ENCODE measurements at regions of chr3 and their contacts with region 1.

Region 1: DNA sequence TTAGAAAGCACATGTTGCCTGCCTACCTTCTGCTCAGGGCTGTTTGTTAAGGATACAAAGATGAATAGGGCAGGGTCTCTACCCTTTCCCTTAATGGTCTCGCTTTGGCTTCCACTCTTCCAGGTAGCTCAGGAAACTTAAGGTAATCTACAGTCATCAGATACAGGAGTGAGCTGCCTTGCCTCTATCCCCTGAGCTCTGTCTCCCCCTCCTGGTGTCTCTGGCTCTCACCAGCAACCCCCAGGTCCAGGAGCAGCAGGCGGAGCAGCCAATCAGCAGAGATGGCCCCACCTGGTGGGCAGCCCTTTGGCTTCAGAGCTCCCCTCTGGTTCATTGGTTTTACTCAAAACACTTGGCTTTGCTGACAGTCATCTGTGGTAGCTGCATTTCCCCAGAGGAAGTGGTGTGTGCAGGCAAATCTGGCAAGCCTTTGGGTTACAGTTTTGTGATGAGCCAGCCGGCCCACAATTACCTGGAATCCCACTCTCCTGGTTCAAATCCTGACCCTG is 8.5 kb upstream of the CX3CR1 start:
- DNase-seq: peak; percentile 95
- ATAC-seq: peak; percentile 97
- H3K4me3 ChIP-seq: no peak overlapping the region
- H3K27ac ChIP-seq: no peak overlapping the region
- H3K4me1 ChIP-seq: peaks cover 17% of the 10 kb centered on the region
- H3K27me3 ChIP-seq: no peaks in the 10 kb centered on the region
- CTCF ChIP-seq: peak; percentile 93 to 99 (median 99); a peak in 5 of 6 replicates
- EP300 ChIP-seq: peak in 1 of 2 experiments; percentile 65; a peak in 2 of 4 replicates
- POLR2A ChIP-seq: no peak
- RAD21 ChIP-seq: peak; percentile 99

Region 2: DNA sequence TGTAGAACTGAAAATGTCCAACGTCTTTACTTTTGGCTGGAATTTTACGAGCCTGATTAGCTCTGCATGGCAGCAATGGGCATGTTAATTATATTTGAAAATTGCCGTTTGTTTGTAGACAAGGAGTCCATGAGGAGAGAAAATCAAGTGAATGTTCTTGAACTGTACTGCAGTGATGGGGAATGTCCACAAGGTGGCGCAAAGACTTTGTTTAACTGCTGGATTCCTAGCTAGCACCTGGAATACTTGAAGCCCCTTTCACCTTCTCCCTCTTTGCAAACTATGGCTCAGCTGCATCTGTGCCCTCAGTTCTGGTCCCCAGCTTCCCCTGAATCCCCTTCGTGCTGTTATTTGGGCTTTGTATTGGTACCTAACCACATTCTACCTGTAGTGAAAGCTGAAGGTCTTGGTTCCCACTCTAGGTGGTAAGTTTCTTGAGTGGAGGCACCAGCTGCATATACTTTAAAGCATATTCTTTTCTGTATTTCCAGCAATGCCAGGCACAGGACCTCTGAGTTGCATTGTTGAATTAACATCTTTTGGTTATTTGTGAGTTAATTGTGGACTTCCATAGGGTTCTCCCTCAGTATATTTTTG is 766.9 kb before region 1 on chr3:
- CTCF ChIA-PET with region 1: interaction called, 8 read pairs
- POLR2A ChIA-PET with region 1: no interaction called
- RAD21 ChIA-PET with region 1: interaction called, 10 read pairs
- SMC1A ChIA-PET with region 1: interaction called, 5 read pairs
- in situ Hi-C with region 1: no loop called
- intact Hi-C with region 1: no loop called
- DNase-seq: peak; percentile 27
- ATAC-seq: peak; percentile 78
- H3K4me3 ChIP-seq: no peak overlapping the region
- H3K27ac ChIP-seq: no peak overlapping the region
- H3K4me1 ChIP-seq: no peaks in the 10 kb centered on the region
- H3K27me3 ChIP-seq: no peaks in the 10 kb centered on the region
- CTCF ChIP-seq: peak; percentile 85 to 95 (median 91)
- EP300 ChIP-seq: no peak
- POLR2A ChIP-seq: no peak
- RAD21 ChIP-seq: peak; percentile 68

Region 3: DNA sequence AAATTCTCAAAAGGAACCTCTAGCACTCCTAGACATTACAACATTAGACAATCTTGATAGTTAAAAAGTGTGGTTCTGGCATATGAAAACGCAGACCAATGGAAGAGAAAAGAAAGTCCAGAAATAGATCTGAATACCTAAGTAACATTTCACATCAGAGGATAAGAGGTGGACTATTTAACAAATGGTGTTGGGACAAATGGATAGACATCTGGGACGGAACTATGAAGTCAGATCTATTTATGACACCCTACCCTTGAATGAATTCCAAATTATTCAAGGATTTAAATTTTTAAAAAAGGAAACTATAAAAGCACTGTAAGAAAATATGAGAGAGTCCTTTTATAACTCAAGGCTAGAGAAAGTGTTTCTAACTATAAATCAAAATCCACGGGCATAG is 348.0 kb before region 1 on chr3:
- CTCF ChIA-PET with region 1: no interaction called
- POLR2A ChIA-PET with region 1: no interaction called
- RAD21 ChIA-PET with region 1: no interaction called
- SMC1A ChIA-PET with region 1: no interaction called
- in situ Hi-C with region 1: no loop called
- intact Hi-C with region 1: no loop called
- DNase-seq: no peak
- ATAC-seq: no peak
- H3K4me3 ChIP-seq: no peak overlapping the region
- H3K27ac ChIP-seq: no peak overlapping the region
- H3K4me1 ChIP-seq: no peaks in the 10 kb centered on the region
- H3K27me3 ChIP-seq: no peaks in the 10 kb centered on the region; a peak in 1 of 4 replicates
- CTCF ChIP-seq: no peak
- EP300 ChIP-seq: no peak
- POLR2A ChIP-seq: no peak
- RAD21 ChIP-seq: no peak

Region 4: DNA sequence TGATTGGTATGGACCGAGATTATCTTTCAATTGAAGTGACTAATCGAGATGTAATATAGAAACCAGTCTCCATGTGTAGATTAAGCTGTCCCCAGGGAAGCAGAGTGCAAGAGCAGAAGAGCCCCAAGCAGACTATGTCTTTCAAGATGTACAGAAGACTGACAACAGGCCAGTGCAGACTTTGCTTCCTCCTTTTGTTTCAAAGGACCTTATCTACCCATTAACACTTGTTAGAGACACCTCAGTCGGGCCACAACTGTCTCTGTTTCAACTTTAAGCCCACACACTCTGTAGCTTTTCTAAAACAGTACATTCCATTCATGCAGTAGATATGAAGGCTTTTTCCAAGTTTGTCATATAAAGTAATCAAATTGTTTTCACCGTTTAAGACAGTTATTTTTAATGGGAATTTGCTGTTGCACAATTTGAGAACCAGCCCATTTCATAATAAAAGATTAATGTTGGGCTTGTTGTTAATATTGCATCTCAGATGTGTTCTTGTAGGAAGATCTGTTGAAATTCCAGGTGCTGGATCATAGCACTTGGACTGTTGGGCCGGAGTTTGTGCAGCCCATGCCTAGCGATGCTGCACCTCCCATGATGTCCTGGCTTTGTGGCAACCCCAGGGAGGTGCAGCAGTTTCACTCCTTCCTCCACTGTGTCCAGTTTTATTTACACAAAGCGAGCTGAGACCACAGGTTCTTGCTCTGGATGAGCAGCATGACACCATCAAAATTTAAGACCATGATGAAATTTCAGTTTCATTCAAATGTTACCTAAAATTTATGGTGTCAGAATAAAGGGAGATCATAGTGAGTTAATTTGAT is 193.3 kb before region 1 on chr3:
- CTCF ChIA-PET with region 1: interaction called, 13 read pairs
- POLR2A ChIA-PET with region 1: no interaction called
- RAD21 ChIA-PET with region 1: interaction called, 3 read pairs
- SMC1A ChIA-PET with region 1: interaction called, 9 read pairs
- in situ Hi-C with region 1: loop called (anchors 5 kb)
- intact Hi-C with region 1: no loop called
- DNase-seq: no peak
- ATAC-seq: no peak
- H3K4me3 ChIP-seq: no peak overlapping the region
- H3K27ac ChIP-seq: no peak overlapping the region
- H3K4me1 ChIP-seq: no peaks in the 10 kb centered on the region
- H3K27me3 ChIP-seq: no peaks in the 10 kb centered on the region
- CTCF ChIP-seq: no peak
- EP300 ChIP-seq: no peak
- POLR2A ChIP-seq: no peak
- RAD21 ChIP-seq: no peak

Region 5: DNA sequence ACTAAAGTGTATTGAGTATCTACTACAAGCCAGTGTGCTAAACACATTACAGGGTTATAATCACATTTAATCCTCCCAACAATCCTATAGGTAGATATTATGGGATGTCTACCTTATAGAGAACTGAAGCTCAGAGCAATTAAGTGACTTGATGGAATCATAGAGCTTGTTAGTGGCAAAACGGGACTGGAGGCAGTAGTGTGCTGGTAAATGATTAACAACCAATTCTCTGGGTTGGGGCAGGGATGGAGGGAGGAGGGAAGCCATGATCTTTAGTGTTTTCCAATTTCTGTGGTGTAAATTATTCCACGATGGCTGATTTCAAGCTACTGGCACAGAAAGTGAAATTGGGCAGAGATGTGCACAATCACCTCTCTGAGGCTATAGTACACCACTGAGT is 116.5 kb before region 1 on chr3:
- CTCF ChIA-PET with region 1: interaction called, 39 read pairs
- POLR2A ChIA-PET with region 1: interaction called, 4 read pairs
- RAD21 ChIA-PET with region 1: interaction called, 7 read pairs
- SMC1A ChIA-PET with region 1: interaction called, 34 read pairs
- in situ Hi-C with region 1: no loop called
- intact Hi-C with region 1: no loop called
- DNase-seq: no peak
- ATAC-seq: peak; percentile 25; the same call in 1 of the 3 replicates
- H3K4me3 ChIP-seq: no peak overlapping the region
- H3K27ac ChIP-seq: no peak overlapping the region
- H3K4me1 ChIP-seq: no peaks in the 10 kb centered on the region
- H3K27me3 ChIP-seq: no peaks in the 10 kb centered on the region; a peak in 1 of 4 replicates
- CTCF ChIP-seq: no peak
- EP300 ChIP-seq: no peak
- POLR2A ChIP-seq: no peak
- RAD21 ChIP-seq: no peak

Region 6: GRCh38 chr3:39216176-39216790 is 72.1 kb before region 1 on chr3:
- CTCF ChIA-PET with region 1: interaction called, 389 read pairs
- POLR2A ChIA-PET with region 1: interaction called, 8 read pairs
- RAD21 ChIA-PET with region 1: interaction called, 36 read pairs
- SMC1A ChIA-PET with region 1: interaction called, 237 read pairs
- in situ Hi-C with region 1: no loop called
- intact Hi-C with region 1: loop called (anchors 1 kb)
- DNase-seq: peak; percentile 68
- ATAC-seq: peak; percentile 97
- H3K4me3 ChIP-seq: no peak overlapping the region
- H3K27ac ChIP-seq: no peak overlapping the region; the same call in 1 of the 2 replicates
- H3K4me1 ChIP-seq: peaks cover 26% of the 10 kb centered on the region
- H3K27me3 ChIP-seq: no peaks in the 10 kb centered on the region
- CTCF ChIP-seq: no peak
- EP300 ChIP-seq: peak; percentile 85 to 96
- POLR2A ChIP-seq: no peak
- RAD21 ChIP-seq: no peak

Region 7: DNA sequence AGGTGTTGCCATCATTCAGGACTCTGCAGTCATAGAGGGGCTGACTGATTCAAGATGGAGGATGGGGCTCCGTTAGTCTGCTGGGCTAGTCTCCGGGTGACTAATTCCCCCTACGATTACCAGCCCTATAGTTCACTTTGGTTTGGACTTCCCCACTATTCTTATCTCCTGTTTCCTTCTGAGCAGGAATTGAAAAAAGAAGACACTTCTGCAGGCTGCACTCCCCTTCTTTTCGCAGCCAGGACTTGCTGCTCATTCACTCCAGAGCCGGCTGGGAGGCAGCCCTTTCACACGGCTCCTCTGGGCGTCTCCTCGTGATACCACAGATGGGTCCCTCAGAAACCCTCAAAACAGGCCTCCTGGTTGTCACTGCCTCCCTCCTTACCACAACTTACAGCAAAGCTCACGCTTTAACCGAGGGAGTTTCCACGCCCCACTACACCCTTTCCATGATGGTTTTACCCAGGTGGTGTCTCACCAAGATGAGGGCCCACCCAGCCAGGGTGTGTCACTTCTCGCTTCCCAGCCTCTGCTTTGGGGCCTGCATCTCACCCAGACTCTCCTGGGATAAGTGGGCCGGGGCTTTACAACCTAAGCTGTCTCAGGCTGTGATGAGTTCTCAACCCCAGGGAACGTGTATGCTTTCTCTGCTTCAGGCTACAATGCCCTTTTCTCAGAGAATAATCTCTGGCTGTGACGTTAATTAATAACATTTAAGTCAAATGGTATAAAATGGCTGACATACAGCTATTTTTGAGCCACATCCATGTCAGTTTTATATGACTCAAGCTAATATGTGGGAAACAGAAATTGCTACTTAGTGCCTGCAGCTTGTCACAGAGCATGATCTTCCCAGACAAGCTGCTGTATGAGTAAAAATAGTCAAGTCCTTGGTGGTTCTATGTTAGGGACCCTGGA is 20.5 kb before region 1 on chr3:
- CTCF ChIA-PET with region 1: interaction called, 191 read pairs
- POLR2A ChIA-PET with region 1: no interaction called
- RAD21 ChIA-PET with region 1: interaction called, 22 read pairs
- SMC1A ChIA-PET with region 1: interaction called, 163 read pairs
- in situ Hi-C with region 1: no loop called
- intact Hi-C with region 1: no loop called
- DNase-seq: no peak
- ATAC-seq: peak; percentile 84
- H3K4me3 ChIP-seq: no peak overlapping the region
- H3K27ac ChIP-seq: no peak overlapping the region
- H3K4me1 ChIP-seq: peaks cover 7% of the 10 kb centered on the region
- H3K27me3 ChIP-seq: no peaks in the 10 kb centered on the region; a peak in 1 of 4 replicates
- CTCF ChIP-seq: no peak
- EP300 ChIP-seq: 0 out of 4 replicates have a peak, but pooled peaks of 1 of the 2 experiments have one; percentile 28
- POLR2A ChIP-seq: no peak
- RAD21 ChIP-seq: no peak

Region 8: GRCh38 chr3:39361252-39361927 is 73.0 kb after region 1 on chr3:
- CTCF ChIA-PET with region 1: interaction called, 11 read pairs
- POLR2A ChIA-PET with region 1: no interaction called
- RAD21 ChIA-PET with region 1: interaction called, 10 read pairs
- SMC1A ChIA-PET with region 1: interaction called, 3 read pairs
- in situ Hi-C with region 1: no loop called
- intact Hi-C with region 1: no loop called
- DNase-seq: no peak
- ATAC-seq: peak; percentile 94
- H3K4me3 ChIP-seq: no peak overlapping the region
- H3K27ac ChIP-seq: peak overlapping the region; percentile 20; the same call in 1 of the 2 replicates
- H3K4me1 ChIP-seq: peaks cover 11% of the 10 kb centered on the region
- H3K27me3 ChIP-seq: no peaks in the 10 kb centered on the region
- CTCF ChIP-seq: no peak
- EP300 ChIP-seq: no peak
- POLR2A ChIP-seq: no peak
- RAD21 ChIP-seq: no peak